Dorsolateral prefrontal cortex (tissue), 120 donors: ENCODE measurements at regions of chr7 and their contacts with region 1.

Region 1: GRCh38 chr7:25125137-25125946 is at the start of gene CYCS:
- DNase-seq: peak; percentile 99 to 100 (median 99)
- H3K4me3 ChIP-seq: peak within 1 kb of the TSS; percentile 62 to 100 (median 95)
- H3K27ac ChIP-seq: peak within 1 kb of the TSS; percentile 83 to 98 (median 95)
- H3K27me3 ChIP-seq: no peaks in the 10 kb centered on the region
- CTCF ChIP-seq: peak in 27 of 56 donors; percentile 1 to 56 (median 34)
- total RNA-seq, gene CYCS: 75.3 to 284 (median 169) TPM

Region 2: DNA sequence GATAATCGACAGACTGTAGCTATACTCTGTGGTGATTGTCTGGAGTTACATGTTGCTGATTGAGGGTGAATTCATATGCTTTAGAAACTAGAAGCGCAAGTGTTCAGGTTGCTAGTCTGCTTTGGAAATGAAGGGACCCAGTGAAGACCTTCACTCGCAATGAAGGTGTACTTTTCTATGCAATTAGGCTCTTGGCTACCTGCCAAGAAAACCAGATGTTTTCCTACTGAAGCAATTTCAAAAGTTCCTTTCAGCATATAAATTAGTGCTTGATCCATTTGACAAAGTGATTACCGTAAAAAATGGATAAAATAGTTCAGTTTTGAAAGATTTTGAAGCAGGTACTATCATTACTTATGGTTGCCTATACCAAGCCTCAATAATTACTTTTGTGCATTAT is 1425.3 kb before region 1 on chr7:
- intact Hi-C with region 1: loop called in 1 of 2 experiments (anchors 10 kb)
- DNase-seq: no peak
- H3K4me3 ChIP-seq: no peak overlapping the region
- H3K27ac ChIP-seq: no peak overlapping the region
- H3K27me3 ChIP-seq: no peaks in the 10 kb centered on the region
- CTCF ChIP-seq: no peak

Region 3: DNA sequence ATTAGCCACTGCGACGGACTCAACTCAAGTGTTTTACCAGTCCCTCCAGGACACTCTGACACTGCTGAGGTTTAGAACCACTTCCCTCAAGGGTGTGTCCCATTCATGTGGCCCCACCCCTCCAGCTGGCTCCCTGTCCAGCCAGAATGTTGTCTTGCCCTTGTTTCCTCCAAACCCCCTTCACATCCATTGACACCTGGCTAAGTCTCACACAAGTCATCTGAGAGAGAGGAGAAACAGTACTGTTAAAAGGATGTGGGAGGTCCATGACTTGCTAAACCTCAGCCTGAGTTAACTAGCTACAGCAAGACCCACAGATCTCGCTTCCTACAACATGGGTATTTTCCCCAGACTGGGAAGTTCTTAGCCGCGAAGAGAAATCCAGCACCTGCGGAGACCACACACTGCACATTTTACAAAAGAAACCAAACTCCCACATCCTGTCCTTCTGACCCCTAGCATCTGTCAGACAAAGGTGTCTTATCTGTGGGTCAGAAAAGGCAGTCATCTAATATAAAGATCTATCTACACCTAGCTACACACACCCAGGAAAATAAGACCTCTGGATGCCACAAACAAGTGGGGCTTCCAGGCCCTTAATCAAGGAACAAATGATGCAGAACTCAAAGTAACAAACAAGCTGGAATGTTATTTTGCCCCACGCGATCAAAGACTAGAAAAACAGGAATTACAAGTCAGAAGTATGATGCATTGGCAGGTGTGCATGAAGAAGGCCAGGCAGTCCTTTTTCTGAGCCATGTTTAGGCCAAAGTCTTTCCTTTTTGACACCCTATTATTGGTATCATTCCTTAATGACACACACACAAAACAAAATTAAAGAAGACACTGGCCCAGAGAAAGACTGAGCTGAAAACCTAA is 159.3 kb before region 1 on chr7:
- intact Hi-C with region 1: no loop called
- DNase-seq: no peak
- H3K4me3 ChIP-seq: no peak overlapping the region
- H3K27ac ChIP-seq: no peak overlapping the region
- H3K27me3 ChIP-seq: no peaks in the 10 kb centered on the region
- CTCF ChIP-seq: no peak